GM13977 (cell line): ENCODE measurements at regions of chr13 and their contacts with region 1.

Region 1: GRCh38 chr13:33723772-33724435 is 94.0 kb upstream of the RFC3 start:
- DNase-seq: peak; percentile 48
- CTCF ChIP-seq: peak; percentile 74

Region 2: DNA sequence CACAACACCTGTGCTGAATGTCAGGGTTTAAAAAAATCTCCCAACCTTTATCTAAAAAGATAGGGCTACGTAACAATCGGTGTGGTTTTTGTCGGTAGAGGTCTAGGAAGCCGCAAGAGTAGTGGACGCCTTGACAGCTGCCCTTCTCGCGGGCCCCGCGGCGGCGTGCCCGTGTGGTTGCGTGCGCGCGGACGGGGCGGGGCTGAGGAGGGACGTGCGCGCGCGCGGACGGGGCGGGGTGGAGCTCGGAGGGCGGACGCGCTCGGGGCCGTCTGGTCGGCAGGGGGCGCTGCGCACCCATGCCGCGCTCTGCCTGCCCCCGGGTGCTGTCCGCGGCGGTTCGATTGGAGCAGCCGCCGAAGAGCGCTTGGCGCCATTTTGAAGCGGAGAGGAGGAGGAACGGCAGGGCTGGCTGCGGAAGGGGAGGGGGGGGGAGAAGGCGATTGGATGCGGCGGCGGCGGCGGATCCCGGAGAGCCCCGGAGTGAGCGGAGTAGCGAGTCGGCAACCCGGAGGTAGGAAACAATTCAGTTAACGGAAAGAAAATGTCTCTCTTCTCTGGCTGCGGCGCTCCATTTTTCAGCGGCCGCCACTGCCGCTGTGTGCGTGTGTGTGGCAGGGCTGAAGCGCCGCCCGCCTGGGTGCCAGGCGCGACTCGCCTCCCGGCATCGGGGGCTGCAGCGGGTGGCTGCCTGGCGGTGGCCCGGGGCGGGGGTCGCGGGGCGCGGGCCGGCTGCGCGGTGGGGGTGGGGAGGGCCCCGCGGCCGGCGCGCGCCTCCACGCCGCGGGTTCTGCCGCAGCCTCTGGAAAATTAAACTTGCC is 1137.6 kb before region 1 on chr13 and contains the start of gene PDS5B:
- in situ Hi-C with region 1: loop called (anchors 25 kb)
- DNase-seq: peak; percentile 95
- CTCF ChIP-seq: peak; percentile 96

Region 3: GRCh38 chr13:33204130-33204927 is 519.6 kb before region 1 on chr13:
- in situ Hi-C with region 1: loop called (anchors 25 kb)
- DNase-seq: no peak
- CTCF ChIP-seq: no peak

Region 4: GRCh38 chr13:33542283-33543088 is 181.4 kb before region 1 on chr13:
- in situ Hi-C with region 1: loop called (anchors 10 kb)
- DNase-seq: peak; percentile 89
- CTCF ChIP-seq: peak; percentile 88

Region 5: DNA sequence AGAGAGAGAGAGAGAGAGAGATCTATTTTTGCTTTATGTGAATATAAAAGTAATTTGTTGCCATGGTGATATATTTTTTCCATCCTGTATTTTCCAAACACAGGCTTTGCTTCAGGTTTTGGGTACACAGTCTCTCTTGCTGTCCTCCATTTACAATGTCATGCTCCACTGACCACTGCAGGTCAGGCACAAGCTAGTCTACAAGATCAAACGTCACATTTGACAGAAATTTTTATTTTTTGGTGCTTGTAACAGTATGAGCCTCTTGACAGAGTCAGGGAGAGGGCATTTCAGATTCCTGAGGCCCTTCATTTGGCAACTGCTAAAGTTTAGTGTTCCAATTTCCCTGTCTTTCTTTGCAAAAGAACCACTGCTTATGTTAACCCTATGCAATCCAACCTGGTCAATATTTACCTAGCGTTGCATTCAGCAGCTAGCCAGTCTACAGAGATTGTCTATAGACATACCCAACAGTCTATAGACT is 269.0 kb after region 1 on chr13:
- in situ Hi-C with region 1: no loop called
- DNase-seq: no peak
- CTCF ChIP-seq: no peak

Region 6: DNA sequence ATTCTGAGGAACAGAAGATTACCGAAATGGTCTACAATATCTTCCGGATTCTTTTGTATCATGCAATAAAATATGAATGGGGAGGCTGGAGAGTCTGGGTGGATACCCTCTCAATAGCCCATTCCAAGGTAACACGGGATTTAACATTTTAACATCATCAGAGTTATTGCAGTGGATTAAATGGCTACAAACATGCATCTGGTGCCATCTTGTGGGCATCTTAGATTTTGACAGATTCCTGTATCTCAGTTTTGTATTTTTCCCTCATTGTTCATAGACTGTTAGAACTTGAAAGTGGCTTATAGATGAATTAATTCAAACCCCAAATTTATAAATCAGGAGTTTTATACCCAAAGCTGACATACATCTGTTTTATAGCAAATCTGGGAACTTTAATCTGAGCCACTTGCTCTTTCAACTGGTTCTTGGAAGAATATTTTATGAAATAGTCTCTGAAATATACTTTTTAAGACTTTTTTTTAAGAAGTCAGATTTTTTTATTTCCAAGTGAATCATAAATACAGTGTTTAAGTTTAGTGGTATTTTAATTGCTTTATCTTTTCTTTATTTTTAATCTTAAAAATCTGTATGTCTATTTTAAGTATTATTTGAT is 1433.3 kb after region 1 on chr13:
- in situ Hi-C with region 1: loop called (anchors 25 kb)
- DNase-seq: peak; percentile 38
- CTCF ChIP-seq: peak; percentile 50